ENCODE measurements at regions of chr19 and their contacts with region 1.

Region 1: GRCh38 chr19:45178262-45179071 is at the start of gene BLOC1S3:
- DNase-seq: peak; percentile 100
- H3K4me3 Mint-ChIP-seq: peak within 1 kb of the TSS; percentile 87
- H3K27ac Mint-ChIP-seq: peak within 1 kb of the TSS; percentile 96
- H3K4me1 Mint-ChIP-seq: peaks cover 27% of the 10 kb centered on the region
- H3K27me3 Mint-ChIP-seq: no peaks in the 10 kb centered on the region
- CTCF ChIP-seq: no peak
- total RNA-seq, gene BLOC1S3: 14.0 and 18.1 TPM in 2 replicates

Region 2: GRCh38 chr19:45066921-45067656 is 111.4 kb before region 1 on chr19:
- CTCF ChIA-PET with region 1: no interaction called
- POLR2A ChIA-PET with region 1: no interaction called
- intact Hi-C with region 1: no loop called
- DNase-seq: no peak
- H3K4me3 Mint-ChIP-seq: no peak overlapping the region
- H3K27ac Mint-ChIP-seq: no peak overlapping the region
- H3K4me1 Mint-ChIP-seq: no peaks in the 10 kb centered on the region
- H3K27me3 Mint-ChIP-seq: no peaks in the 10 kb centered on the region
- CTCF ChIP-seq: no peak

Region 3: GRCh38 chr19:45079063-45079910 is 99.2 kb before region 1 on chr19 and contains the start of gene GEMIN7:
- CTCF ChIA-PET with region 1: interaction called, 3 read pairs
- POLR2A ChIA-PET with region 1: interaction called, 26 read pairs
- intact Hi-C with region 1: no loop called
- DNase-seq: peak; percentile 74
- H3K4me3 Mint-ChIP-seq: peak within 1 kb of the TSS; percentile 99
- H3K27ac Mint-ChIP-seq: peak within 1 kb of the TSS; percentile 94
- H3K4me1 Mint-ChIP-seq: peaks cover 22% of the 10 kb centered on the region
- H3K27me3 Mint-ChIP-seq: no peaks in the 10 kb centered on the region
- CTCF ChIP-seq: no peak
- total RNA-seq, gene GEMIN7: 21.0 and 21.8 TPM in 2 replicates

Region 4: DNA sequence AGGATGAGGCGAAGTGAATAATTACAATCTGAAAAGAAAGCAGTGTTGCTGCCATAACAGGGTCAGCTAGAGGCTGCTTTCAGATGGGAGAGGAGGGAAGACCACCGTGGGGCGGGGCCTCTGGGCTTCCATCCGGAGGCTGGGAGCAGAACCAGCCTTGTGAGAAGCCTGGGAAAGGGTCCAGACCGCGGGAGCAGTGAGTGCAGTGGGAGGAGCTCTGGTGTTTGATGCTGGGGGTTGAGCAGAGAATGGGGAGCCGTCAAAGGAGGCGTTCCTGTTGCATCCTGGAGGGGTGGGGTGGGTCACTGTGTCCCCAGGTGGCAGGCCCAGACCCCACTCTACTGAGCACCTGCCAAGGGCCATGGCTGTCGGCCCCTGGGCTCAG is 35.7 kb before region 1 on chr19:
- CTCF ChIA-PET with region 1: no interaction called
- POLR2A ChIA-PET with region 1: no interaction called
- intact Hi-C with region 1: no loop called
- DNase-seq: no peak
- H3K4me3 Mint-ChIP-seq: no peak overlapping the region
- H3K27ac Mint-ChIP-seq: peak overlapping the region; percentile 81
- H3K4me1 Mint-ChIP-seq: peaks cover 6% of the 10 kb centered on the region
- H3K27me3 Mint-ChIP-seq: no peaks in the 10 kb centered on the region
- CTCF ChIP-seq: no peak

Region 5: DNA sequence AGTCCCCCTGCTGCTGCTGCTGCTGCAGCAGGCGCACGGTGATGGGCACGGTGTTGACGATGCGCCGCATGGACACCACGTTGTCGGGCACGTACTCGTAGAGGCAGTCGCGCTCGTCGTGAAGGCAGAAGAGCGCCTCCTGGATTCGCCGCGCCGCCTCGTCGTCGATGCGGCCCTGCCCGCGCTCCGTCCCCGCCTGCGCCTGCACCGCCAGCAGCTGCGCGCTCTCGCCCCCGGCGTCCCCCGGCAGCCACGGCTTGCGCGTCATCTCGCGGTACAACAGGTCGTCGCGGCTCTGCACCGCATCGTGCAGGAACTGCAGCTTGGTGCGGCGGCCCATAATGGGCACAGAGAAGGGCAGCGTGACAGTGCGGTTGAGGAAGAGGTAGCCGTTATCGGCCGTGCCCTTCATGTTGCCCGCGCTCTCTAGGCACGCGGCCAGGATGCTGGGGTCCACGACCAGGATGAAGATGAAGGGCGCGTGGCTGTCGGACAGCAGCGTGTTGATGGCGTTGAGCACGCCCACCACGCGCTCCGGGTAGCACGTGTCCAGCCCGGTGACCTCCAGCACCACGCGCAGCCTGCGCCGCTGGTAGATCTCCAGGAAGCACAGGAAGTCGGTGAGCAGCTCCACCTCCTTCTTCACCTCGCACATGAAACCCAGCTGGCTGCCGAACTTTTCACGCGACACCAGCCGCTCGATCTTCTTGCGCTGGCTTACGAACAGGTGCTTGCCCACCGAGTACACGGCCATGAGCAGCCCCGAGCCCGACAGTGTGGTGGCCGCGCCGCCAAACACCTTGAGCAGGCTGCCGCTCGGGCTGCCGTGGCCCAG is 25.7 kb before region 1 on chr19:
- CTCF ChIA-PET with region 1: interaction called, 3 read pairs
- POLR2A ChIA-PET with region 1: interaction called, 11 read pairs
- intact Hi-C with region 1: no loop called
- DNase-seq: no peak
- H3K4me3 Mint-ChIP-seq: no peak overlapping the region
- H3K27ac Mint-ChIP-seq: no peak overlapping the region
- H3K4me1 Mint-ChIP-seq: peaks cover 16% of the 10 kb centered on the region
- H3K27me3 Mint-ChIP-seq: no peaks in the 10 kb centered on the region
- CTCF ChIP-seq: no peak

Region 6: GRCh38 chr19:45200568-45200994 is 22.1 kb after region 1 on chr19:
- CTCF ChIA-PET with region 1: no interaction called
- POLR2A ChIA-PET with region 1: interaction called, 10 read pairs
- intact Hi-C with region 1: no loop called
- DNase-seq: peak; percentile 55
- H3K4me3 Mint-ChIP-seq: no peak overlapping the region
- H3K27ac Mint-ChIP-seq: no peak overlapping the region
- H3K4me1 Mint-ChIP-seq: peaks cover 21% of the 10 kb centered on the region
- H3K27me3 Mint-ChIP-seq: peaks cover 11% of the 10 kb centered on the region
- CTCF ChIP-seq: peak; percentile 18

Region 7: DNA sequence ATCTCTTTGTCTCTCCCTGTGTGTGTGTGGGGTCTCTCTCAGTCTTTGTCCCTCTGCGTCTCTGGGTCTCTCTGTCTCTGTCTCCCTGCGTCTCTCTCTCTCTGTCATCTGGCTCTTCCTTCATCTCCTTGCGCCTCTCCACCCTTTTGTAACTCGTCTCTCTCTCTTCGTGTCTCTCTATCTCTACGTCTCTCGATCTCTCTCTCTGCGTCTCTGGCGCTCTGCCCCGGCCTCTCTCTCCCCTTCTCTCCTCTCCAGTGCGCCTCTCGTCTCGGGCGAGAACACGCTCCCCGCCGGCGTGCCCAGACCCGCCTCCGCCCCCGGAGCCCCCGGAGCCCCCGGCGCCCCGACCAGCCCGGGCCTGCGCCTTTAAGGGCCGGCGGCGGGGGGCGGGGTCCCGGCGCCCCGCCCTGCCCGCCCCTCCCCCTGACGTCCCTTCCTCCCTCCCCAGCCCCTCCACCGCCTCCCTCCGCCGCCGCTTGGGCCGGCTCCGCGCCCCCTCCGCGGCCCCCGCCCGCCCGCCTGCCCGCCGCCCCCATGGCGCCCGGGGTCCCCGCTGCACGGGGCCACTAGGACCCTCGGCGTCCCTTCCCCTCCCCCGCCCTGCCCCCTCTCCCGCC is 72.5 kb after region 1 on chr19 and contains the start of gene MARK4:
- CTCF ChIA-PET with region 1: interaction called, 4 read pairs
- POLR2A ChIA-PET with region 1: interaction called, 20 read pairs
- intact Hi-C with region 1: no loop called
- DNase-seq: peak; percentile 50
- H3K4me3 Mint-ChIP-seq: peak within 1 kb of the TSS; percentile 83
- H3K27ac Mint-ChIP-seq: peak within 1 kb of the TSS; percentile 93
- H3K4me1 Mint-ChIP-seq: peaks cover 20% of the 10 kb centered on the region
- H3K27me3 Mint-ChIP-seq: no peaks in the 10 kb centered on the region
- CTCF ChIP-seq: no peak
- total RNA-seq, gene MARK4: 22.4 and 24.2 TPM in 2 replicates